ENCODE measurements at regions of chr2 and their contacts with region 1.

Region 1: GRCh38 chr2:224650815-224651439 is 65.2 kb downstream of the CCDC195 start:
- DNase-seq: peak in 2 of 4 donors; percentile 35 to 65
- ATAC-seq: peak; percentile 87
- H3K4me3 ChIP-seq: no peak overlapping the region
- H3K27ac ChIP-seq: no peak overlapping the region
- H3K4me1 ChIP-seq: no peaks in the 10 kb centered on the region
- H3K27me3 ChIP-seq: no peaks in the 10 kb centered on the region
- CTCF ChIP-seq: peak; percentile 62 to 69

Region 2: GRCh38 chr2:224357098-224357901 is 293.6 kb before region 1 on chr2:
- intact Hi-C with region 1: loop called (anchors 5 to 10 kb)
- DNase-seq: peak in 2 of 4 donors; percentile 62 to 71
- ATAC-seq: peak; percentile 95
- H3K4me3 ChIP-seq: no peak overlapping the region
- H3K27ac ChIP-seq: no peak overlapping the region
- H3K4me1 ChIP-seq: no peaks in the 10 kb centered on the region
- H3K27me3 ChIP-seq: no peaks in the 10 kb centered on the region
- CTCF ChIP-seq: peak; percentile 69 to 72

Region 3: GRCh38 chr2:224449212-224450147 is 201.4 kb before region 1 on chr2:
- intact Hi-C with region 1: loop called in 1 of 2 experiments (anchors 10 kb)
- DNase-seq: peak in 1 of 4 donors; percentile 35
- ATAC-seq: peak; percentile 50
- H3K4me3 ChIP-seq: no peak overlapping the region
- H3K27ac ChIP-seq: no peak overlapping the region
- H3K4me1 ChIP-seq: no peaks in the 10 kb centered on the region
- H3K27me3 ChIP-seq: no peaks in the 10 kb centered on the region
- CTCF ChIP-seq: peak; percentile 16 to 39

Region 4: DNA sequence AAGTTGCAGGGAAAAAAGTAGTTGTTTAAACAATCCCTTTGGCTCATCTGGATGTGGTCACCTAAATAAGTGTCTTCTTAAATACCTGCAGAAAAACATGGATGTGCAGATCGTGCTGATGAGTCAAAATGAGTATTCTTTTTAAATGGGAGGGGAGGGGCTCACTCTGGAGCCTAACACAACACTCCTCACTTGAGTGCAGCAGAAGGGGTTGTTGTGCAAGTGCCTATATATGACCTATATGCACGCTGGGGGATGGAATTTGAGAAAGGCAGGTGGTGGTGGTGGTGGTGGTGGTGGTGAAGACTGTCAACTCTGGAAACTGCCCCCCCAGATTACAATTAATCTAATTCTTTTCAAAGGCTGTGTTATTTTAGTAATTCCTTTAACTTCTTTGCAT is 171.1 kb before region 1 on chr2:
- intact Hi-C with region 1: no loop called
- DNase-seq: no peak
- ATAC-seq: no peak
- H3K4me3 ChIP-seq: no peak overlapping the region
- H3K27ac ChIP-seq: no peak overlapping the region
- H3K4me1 ChIP-seq: no peaks in the 10 kb centered on the region
- H3K27me3 ChIP-seq: no peaks in the 10 kb centered on the region
- CTCF ChIP-seq: no peak

Region 5: GRCh38 chr2:224545884-224546644 is 104.9 kb before region 1 on chr2:
- intact Hi-C with region 1: no loop called
- DNase-seq: no peak
- ATAC-seq: no peak
- H3K4me3 ChIP-seq: no peak overlapping the region
- H3K27ac ChIP-seq: no peak overlapping the region
- H3K4me1 ChIP-seq: peaks cover 4 to 10% of the 10 kb centered on the region in 2 donors
- H3K27me3 ChIP-seq: no peaks in the 10 kb centered on the region
- CTCF ChIP-seq: no peak

Region 6: GRCh38 chr2:224793946-224794345 is 143.0 kb after region 1 on chr2:
- intact Hi-C with region 1: no loop called
- DNase-seq: no peak
- ATAC-seq: peak; percentile 51
- H3K4me3 ChIP-seq: no peak overlapping the region
- H3K27ac ChIP-seq: peak overlapping the region in 1 of 2 donors; percentile 34
- H3K4me1 ChIP-seq: no peaks in the 10 kb centered on the region
- H3K27me3 ChIP-seq: no peaks in the 10 kb centered on the region
- CTCF ChIP-seq: no peak

Region 7: GRCh38 chr2:225112362-225113126 is 461.6 kb after region 1 on chr2:
- intact Hi-C with region 1: no loop called
- DNase-seq: peak in 1 of 4 donors; percentile 35
- ATAC-seq: peak; percentile 54
- H3K4me3 ChIP-seq: no peak overlapping the region
- H3K27ac ChIP-seq: no peak overlapping the region
- H3K4me1 ChIP-seq: peaks cover 0 to 7% of the 10 kb centered on the region in 2 donors
- H3K27me3 ChIP-seq: no peaks in the 10 kb centered on the region
- CTCF ChIP-seq: no peak